PC-3 (cell line): ENCODE measurements at regions of chr18 and their contacts with region 1.

Region 1: GRCh38 chr18:42196651-42197050 is 241.6 kb downstream of the PIK3C3 start:
- DNase-seq: peak; percentile 3
- ATAC-seq: no peak
- H3K4me3 ChIP-seq: no peak overlapping the region
- H3K27ac ChIP-seq: no peak overlapping the region
- H3K4me1 ChIP-seq: no peaks in the 10 kb centered on the region; the same call in 1 of the 2 replicates
- H3K27me3 ChIP-seq: no peaks in the 10 kb centered on the region
- CTCF ChIP-seq: no peak

Region 2: GRCh38 chr18:42229211-42230210 is 32.9 kb after region 1 on chr18:
- CTCF ChIA-PET with region 1: no interaction called
- POLR2A ChIA-PET with region 1: no interaction called
- intact Hi-C with region 1: loop called (anchors 5 kb)
- DNase-seq: no peak
- ATAC-seq: no peak
- H3K4me3 ChIP-seq: no peak overlapping the region
- H3K27ac ChIP-seq: no peak overlapping the region
- H3K4me1 ChIP-seq: no peaks in the 10 kb centered on the region
- H3K27me3 ChIP-seq: no peaks in the 10 kb centered on the region
- CTCF ChIP-seq: no peak

Region 3: GRCh38 chr18:42242758-42243157 is 46.1 kb after region 1 on chr18:
- CTCF ChIA-PET with region 1: no interaction called
- POLR2A ChIA-PET with region 1: no interaction called
- intact Hi-C with region 1: no loop called
- DNase-seq: no peak
- ATAC-seq: no peak
- H3K4me3 ChIP-seq: no peak overlapping the region
- H3K27ac ChIP-seq: no peak overlapping the region
- H3K4me1 ChIP-seq: no peaks in the 10 kb centered on the region
- H3K27me3 ChIP-seq: no peaks in the 10 kb centered on the region
- CTCF ChIP-seq: no peak